ENCODE measurements at regions of chr11 and their contacts with region 1.

Region 1: DNA sequence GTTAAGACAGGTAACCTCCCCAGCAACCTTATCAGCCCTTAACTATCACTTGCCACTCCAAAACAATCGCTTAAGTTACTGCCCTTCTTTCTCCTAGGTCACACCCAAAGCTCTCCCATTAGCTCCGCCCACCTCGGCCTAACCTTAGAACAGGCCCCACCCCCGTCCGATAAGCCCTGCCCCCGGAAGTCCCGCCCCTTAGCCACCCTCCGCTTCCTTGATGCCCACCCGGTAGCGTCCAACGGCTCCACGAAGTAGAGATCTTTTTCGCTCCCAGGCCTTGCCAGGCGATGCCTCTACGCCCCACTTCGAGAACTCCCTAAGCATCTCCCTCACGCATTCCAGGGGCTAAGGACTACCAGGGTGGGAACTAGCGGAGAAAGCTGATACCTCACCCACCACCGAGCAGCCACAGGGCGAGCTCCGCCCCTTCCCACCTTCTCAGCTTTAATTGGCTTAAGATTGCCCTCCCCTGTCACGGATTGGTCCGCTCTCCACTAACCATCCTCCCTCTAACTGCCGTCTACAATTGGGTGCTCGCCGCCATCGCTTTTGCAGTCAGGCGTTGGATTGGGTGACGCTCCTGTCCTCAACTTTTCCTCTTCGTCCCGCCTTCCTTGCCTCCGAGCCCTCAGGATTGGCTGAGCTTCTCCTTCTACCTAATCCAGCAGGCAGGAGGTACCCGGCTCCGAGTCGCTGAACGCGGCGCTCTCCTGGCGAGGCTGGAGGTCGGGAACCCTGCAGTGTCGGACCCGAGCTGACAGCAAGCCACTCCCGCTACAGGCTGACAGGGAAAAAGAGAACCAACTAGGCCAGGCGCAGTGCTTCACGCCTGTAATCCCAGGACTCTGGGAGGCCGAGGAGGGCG is at the start of gene ZBTB3:
- DNase-seq: peak; percentile 100
- H3K4me3 ChIP-seq: peak within 1 kb of the TSS; percentile 80 to 97 (median 92)
- H3K27ac ChIP-seq: peak within 1 kb of the TSS; percentile 90 to 91
- H3K4me1 ChIP-seq: peaks cover 4 to 20% (median 12%) of the 10 kb centered on the region in 4 experiments
- H3K27me3 ChIP-seq: no peaks in the 10 kb centered on the region

Region 2: DNA sequence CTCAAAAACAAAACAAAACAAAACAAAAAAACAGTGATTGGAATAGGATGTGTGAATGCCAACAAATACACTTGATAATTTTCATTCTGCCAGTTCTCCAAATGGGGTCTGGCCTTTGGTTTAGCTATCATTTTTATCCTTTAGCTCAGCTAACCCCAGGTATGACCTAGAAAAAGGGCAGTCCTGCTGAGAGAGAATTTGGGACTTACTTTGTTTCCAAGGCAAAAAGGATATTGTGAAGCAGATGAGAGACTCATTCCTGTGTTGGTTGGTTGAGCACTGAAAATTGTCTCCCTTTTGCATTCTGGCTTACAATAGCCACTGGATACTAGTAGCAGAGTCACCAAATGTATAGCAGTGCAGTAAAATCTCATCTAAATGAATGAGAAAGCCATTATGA is 16.8 kb before region 1 on chr11:
- CTCF ChIA-PET with region 1: interaction called, 11 read pairs
- POLR2A ChIA-PET with region 1: interaction called, 3 read pairs
- DNase-seq: no peak
- H3K4me3 ChIP-seq: no peak overlapping the region
- H3K27ac ChIP-seq: no peak overlapping the region
- H3K4me1 ChIP-seq: no peaks in the 10 kb centered on the region
- H3K27me3 ChIP-seq: no peaks in the 10 kb centered on the region

Region 3: DNA sequence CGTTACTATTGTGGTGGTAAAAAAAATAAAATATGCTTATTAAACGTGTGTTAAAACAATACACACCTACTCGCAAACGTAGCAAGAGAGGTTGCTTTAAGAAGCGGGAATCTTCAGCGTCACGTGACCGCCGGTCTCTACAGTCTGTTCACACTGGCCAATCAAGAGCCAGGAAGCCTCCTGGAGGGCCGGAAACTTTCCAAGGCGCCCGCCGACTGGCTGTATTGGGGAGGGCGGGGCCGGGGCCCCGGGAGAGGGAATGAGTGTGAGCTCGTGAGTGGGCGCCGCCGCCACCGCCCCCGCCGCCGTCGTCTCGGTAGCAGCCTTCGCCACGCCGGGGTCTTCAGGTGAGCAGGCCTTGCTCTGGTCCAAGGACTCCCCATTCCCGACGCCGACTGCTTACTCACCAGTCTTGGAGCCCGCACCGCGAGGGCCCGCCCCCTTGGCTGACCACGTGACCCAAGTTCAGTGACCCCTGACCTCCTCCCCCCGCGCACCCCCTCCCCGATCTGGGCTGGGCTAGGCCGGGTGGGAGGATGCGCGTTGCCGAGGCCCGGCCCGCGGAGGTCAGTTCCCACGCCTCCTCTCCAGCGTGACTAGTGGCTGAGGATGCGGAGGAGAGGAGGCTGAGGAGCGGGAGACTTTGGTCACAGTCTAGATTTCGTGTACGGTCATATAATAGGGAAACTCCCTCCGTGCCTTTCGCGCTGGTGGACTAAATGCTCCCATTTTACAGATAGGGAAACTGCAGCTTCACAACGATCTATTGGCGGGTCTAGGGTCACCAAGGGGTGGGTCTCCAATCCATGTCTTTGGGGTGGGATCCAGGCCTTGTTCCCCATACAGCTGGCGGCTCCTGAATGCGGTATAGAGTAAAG is 17.4 kb after region 1 on chr11 and contains the start of gene TAF6L:
- CTCF ChIA-PET with region 1: interaction called, 10 read pairs
- POLR2A ChIA-PET with region 1: interaction called, 5 read pairs
- DNase-seq: peak; percentile 89 to 94 (median 94)
- H3K4me3 ChIP-seq: peak within 1 kb of the TSS; percentile 56 to 85 (median 76)
- H3K27ac ChIP-seq: peak within 1 kb of the TSS; percentile 54 to 82
- H3K4me1 ChIP-seq: peaks cover 3 to 26% (median 18%) of the 10 kb centered on the region in 4 experiments
- H3K27me3 ChIP-seq: no peaks in the 10 kb centered on the region

Region 4: GRCh38 chr11:62880803-62881578 is 127.0 kb after region 1 on chr11 and contains the start of gene SLC3A2:
- CTCF ChIA-PET with region 1: no interaction called
- POLR2A ChIA-PET with region 1: no interaction called
- DNase-seq: peak; percentile 87 to 94 (median 90)
- H3K4me3 ChIP-seq: peak within 1 kb of the TSS; percentile 86 to 100 (median 95)
- H3K27ac ChIP-seq: peak within 1 kb of the TSS; percentile 98 to 99
- H3K4me1 ChIP-seq: peaks cover 15 to 48% (median 32%) of the 10 kb centered on the region in 4 experiments
- H3K27me3 ChIP-seq: no peaks in the 10 kb centered on the region